ENCODE measurements at regions of chr17 and their contacts with region 1.

Region 1: DNA sequence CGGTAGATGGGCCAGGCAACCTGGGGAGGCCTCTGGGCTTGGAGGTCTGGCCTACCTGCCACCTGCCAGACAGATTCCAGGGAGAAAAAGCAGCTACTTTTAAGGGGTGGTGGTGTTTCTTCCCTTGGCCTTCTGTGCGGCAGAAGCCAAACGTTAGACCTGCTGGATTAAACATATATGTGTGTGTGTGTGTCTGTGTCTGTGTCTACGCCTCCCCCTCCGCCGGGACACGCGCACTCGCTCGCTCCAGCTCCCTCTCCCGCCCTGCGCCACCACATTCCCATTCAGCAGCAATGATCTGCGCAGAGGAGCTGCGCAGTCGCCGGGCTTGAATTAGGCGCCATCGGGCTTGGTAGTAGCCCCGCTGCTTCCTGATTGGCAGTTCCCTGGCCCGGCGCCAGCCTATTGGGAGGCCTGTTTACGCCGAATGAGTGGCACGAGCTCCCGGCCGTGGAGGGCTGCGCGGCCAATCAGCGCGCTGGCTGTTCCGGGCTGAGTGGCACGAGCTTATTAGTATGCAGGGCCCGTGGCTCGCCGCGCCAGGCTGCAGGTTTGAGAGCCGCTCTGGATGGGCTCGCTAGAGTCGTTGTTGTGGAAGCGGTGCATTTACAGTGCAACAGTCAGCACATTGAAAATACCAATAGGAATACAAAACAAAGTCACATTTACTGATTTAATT is at the start of gene BAHCC1:
- DNase-seq: peak; percentile 100
- ATAC-seq: peak; percentile 48 to 59
- H3K4me3 ChIP-seq: peak within 1 kb of the TSS; percentile 72 to 84 (median 82)
- H3K27ac ChIP-seq: peak within 1 kb of the TSS; percentile 98 to 99 (median 99)
- H3K4me1 ChIP-seq: peaks cover 25 to 33% of the 10 kb centered on the region in 2 donors
- H3K27me3 ChIP-seq: no peaks in the 10 kb centered on the region
- CTCF ChIP-seq: no peak
- POLR2A ChIP-seq: peak; percentile 98 to 99
- total RNA-seq, gene BAHCC1: 2.5 to 8.4 (median 5.8) TPM

Region 2: GRCh38 chr17:81328978-81329919 is 65.8 kb before region 1 on chr17:
- in situ Hi-C with region 1: no loop called
- intact Hi-C with region 1: loop called (anchors 1 kb)
- DNase-seq: peak; percentile 97 to 99
- ATAC-seq: peak; percentile 37 to 44
- H3K4me3 ChIP-seq: peak overlapping the region; percentile 2 to 43 (median 34)
- H3K27ac ChIP-seq: peak overlapping the region; percentile 90 to 98 (median 96)
- H3K4me1 ChIP-seq: peaks cover 54 to 62% of the 10 kb centered on the region in 2 donors
- H3K27me3 ChIP-seq: no peaks in the 10 kb centered on the region
- CTCF ChIP-seq: no peak
- POLR2A ChIP-seq: peak; percentile 63 to 76

Region 3: DNA sequence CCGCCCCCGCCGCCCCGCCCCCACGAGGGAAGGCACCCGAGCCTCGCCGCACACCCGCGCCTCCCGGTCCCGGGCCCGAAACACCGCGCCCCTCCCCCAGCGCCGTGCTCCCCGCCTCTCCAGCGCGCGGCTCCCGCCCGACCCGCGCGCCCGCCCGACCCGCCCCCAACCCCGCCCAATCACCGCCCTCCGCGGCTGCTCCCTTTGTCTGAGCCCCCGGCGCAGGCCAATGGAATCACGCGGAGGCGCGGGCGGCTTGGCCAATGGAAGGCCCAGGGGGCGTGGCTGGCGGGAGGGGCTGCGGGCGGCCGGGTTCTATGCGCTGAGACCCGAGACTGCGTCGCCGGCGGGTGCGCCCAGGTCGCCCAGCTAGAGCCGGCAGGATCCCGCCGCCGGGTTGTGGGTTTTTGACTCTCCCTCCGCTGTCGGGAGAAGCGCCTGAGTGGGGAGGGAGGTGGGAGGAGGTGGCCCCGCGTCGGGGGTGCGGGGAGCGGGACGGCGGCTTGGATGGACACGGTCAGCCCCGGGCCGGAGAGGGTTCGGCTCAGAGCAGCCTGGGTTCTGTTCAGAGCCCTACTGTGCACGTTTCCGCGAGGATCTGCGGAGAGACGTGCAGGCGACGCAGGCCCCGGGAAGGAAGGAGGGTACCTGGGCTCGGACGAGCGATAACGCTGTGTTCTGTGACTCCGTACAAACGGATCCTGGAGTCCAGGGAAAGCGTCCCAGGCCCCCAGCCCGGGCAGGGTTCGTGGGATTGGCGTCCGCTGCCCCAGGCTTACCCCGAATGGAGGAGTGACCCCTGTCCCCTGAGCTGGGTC is 48.8 kb before region 1 on chr17:
- in situ Hi-C with region 1: no loop called
- intact Hi-C with region 1: loop called (anchors 1 kb)
- DNase-seq: peak; percentile 98
- ATAC-seq: peak; percentile 53 to 59
- H3K4me3 ChIP-seq: peak overlapping the region; percentile 52 to 78 (median 70)
- H3K27ac ChIP-seq: peak overlapping the region; percentile 81 to 99 (median 94)
- H3K4me1 ChIP-seq: peaks cover 12 to 18% of the 10 kb centered on the region in 2 donors
- H3K27me3 ChIP-seq: no peaks in the 10 kb centered on the region
- CTCF ChIP-seq: no peak
- POLR2A ChIP-seq: peak; percentile 95

Region 4: DNA sequence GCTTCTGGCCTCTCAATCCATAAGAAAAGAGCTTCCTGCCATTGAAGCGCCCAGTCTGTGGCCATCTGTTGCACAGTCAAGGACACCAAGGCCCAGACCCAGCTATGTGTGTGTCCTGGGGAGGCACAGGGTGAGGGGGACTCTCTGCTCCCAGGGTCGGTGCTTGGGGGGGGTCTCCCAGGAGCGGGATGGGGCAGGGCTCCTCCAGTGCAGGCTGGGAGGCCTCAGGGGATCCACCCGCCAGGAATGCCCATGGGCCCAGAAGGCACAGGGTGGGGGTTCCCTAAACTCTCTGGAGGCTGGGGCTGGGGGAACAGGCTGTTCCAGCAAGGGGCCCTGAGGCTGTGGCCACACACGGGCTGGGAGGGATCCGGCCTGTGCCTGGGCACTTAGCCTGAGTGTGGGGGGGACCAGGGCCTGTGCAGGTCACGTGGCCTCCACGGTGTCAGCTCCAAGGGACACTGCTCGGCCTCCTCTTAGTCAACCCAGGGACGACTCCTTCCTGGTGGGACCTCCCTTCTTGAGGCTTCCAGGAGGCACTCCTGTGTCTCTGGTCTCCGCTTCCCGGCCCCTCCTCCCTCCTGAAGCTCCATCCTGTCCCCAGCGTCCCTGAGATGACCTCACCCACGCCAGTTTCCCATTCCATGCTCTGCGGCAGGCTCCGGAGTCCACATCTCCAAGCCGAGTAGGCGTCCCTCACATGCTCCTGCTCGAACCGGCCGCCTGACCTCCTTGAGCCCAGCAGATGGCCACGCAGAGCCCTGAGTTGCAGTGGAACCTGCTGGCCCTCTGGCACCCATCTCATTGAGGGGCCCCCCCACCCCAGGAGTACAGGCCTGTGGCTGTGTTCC is 22.9 kb before region 1 on chr17:
- in situ Hi-C with region 1: no loop called
- intact Hi-C with region 1: no loop called
- DNase-seq: peak in 1 of 2 donors; percentile 69
- ATAC-seq: peak; percentile 69 to 70
- H3K4me3 ChIP-seq: no peak overlapping the region
- H3K27ac ChIP-seq: peak overlapping the region; percentile 56 to 67 (median 66)
- H3K4me1 ChIP-seq: peaks cover 6 to 10% of the 10 kb centered on the region in 2 donors
- H3K27me3 ChIP-seq: no peaks in the 10 kb centered on the region
- CTCF ChIP-seq: peak in 1 of 5 experiments; percentile 32
- POLR2A ChIP-seq: no peak

Region 5: DNA sequence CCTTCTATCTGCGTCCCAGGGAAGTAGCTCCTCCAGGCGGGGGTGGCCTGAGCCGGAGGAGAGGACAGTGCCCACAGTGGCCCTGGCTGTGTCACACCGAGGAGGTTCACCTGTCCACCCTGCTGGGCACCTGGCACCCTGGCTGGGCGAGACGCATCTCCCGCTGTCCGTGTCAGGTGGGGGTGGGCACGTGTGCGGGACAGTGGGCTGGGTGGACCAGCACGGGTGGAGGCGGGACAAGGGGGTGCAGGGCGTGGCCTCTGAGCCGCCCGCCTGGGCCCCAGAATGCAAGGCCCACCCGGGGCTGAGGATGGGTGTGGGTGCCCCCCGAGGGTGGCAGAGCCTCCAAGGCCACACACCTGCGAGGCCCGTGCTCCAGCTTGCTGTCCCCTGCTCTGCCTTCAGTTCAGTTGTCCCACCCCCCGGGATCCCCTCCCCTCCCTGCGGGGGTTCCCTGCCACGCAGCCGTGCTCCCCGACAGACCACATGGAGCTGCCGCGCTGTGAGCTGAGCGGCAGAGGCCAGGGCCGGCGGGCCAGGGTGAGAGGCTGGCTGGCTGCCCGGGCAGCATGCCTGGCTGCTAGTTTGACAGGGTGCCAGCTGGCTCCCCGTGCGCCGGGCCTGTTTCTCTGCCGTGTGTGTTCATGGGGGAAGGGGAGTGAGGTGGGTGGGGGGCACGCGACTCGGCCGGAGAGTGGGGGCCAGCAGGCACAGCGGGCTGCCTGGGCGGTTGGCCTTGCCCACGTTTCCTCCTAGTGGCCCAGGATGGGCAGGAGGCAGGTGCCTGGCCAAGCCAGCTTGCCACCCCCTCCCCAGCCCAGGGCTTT is 34.1 kb after region 1 on chr17:
- in situ Hi-C with region 1: no loop called
- intact Hi-C with region 1: loop called (anchors 2 kb)
- DNase-seq: peak in 1 of 2 donors; percentile 59
- ATAC-seq: peak; percentile 19 to 21
- H3K4me3 ChIP-seq: peak overlapping the region; percentile 0 to 30 (median 14)
- H3K27ac ChIP-seq: peak overlapping the region; percentile 75 to 94 (median 85)
- H3K4me1 ChIP-seq: peaks cover 39 to 44% of the 10 kb centered on the region in 2 donors
- H3K27me3 ChIP-seq: no peaks in the 10 kb centered on the region
- CTCF ChIP-seq: no peak
- POLR2A ChIP-seq: no peak

Region 6: DNA sequence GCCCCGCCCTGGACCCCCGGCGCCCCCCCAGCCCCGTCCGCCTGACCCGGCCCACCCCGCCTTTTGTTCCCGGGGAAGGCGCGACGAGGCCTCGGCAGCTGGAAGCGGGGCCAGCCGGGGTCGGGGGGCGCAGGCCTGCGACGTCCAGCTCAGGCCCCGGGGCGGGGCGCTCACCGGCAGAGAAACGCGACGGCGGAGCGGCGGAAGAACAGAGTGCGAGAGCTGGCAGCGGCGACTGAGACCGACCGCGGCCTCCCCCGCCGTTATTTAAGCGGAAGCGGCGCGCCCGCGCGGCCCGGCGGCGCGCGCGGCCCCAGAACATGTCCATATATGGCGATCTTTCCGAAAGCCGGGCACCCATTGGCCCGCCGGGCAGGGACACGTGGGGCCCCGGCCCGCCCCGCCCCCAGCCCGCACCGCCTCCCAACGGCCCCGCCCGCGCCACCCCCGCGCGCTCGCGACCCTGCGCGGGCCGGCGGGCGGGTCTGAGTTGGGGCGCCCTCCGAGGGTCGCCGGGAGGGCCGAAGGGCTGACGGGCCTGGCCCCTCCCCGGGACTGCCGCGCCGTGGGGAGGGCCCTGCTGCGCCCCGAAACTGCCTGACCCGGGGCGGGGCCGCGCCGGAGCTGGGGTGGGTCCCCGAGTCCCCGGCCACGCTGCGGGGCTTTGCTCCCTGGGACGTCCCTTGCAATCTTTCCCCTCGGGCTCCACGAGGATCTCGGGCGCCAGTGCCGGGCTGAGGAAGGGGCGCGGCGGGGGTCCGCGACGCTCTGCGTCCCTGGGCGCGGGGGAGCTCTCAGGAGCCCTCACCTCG is 117.7 kb after region 1 on chr17 and contains the start of gene ACTG1:
- in situ Hi-C with region 1: no loop called
- intact Hi-C with region 1: loop called (anchors 2 kb)
- DNase-seq: peak; percentile 89 to 94
- ATAC-seq: peak; percentile 72 to 73
- H3K4me3 ChIP-seq: peak within 1 kb of the TSS; percentile 81 to 95 (median 89)
- H3K27ac ChIP-seq: peak within 1 kb of the TSS; percentile 91 to 100 (median 99)
- H3K4me1 ChIP-seq: peaks cover 30 to 39% of the 10 kb centered on the region in 2 donors
- H3K27me3 ChIP-seq: no peaks in the 10 kb centered on the region
- CTCF ChIP-seq: no peak
- POLR2A ChIP-seq: peak; percentile 96 to 98
- total RNA-seq, gene ACTG1: 322 to 934 (median 415) TPM

Measured in gastrocnemius medialis (tissue), 4 donors.